ENCODE measurements at regions of chr4 and their contacts with region 1.

Region 1: DNA sequence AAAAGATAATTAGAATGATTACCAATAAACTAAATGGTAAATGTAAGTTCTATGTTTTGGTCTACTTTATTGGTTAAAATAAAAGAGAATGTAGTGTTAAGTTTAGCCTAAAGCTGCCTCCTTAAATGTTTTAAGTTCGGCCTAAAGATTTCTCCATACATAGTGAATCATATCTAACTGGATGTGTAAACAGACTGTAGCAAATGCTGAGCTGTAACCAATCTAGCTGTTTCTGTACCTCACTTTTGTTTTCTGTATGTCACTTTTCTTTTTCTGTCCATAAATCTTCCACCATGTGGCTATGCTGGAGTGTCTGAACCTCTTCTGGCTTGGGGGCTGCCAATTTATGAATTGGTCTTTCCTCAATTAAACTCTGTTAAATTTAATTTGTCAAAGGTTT is 121.2 kb downstream of the TBCK start:
- DNase-seq: no peak
- H3K4me3 ChIP-seq: no peak overlapping the region
- H3K27ac ChIP-seq: no peak overlapping the region
- H3K4me1 ChIP-seq: no peaks in the 10 kb centered on the region
- H3K27me3 ChIP-seq: no peaks in the 10 kb centered on the region
- CTCF ChIP-seq: no peak

Region 2: GRCh38 chr4:105725623-105726022 is 469.2 kb before region 1 on chr4:
- intact Hi-C with region 1: loop called (anchors 10 kb)
- DNase-seq: no peak
- H3K4me3 ChIP-seq: no peak overlapping the region
- H3K27ac ChIP-seq: no peak overlapping the region
- H3K4me1 ChIP-seq: no peaks in the 10 kb centered on the region
- H3K27me3 ChIP-seq: no peaks in the 10 kb centered on the region
- CTCF ChIP-seq: no peak